Common myeloid progenitor, CD34-positive (primary cell): ENCODE measurements at regions of chr6 and their contacts with region 1.

Region 1: GRCh38 chr6:36027501-36028087 is at the start of gene MAPK14:
- DNase-seq: peak; percentile 100
- H3K4me3 ChIP-seq: peak within 1 kb of the TSS; percentile 99 to 100 (median 100)
- H3K27ac ChIP-seq: peak within 1 kb of the TSS; percentile 96 to 98
- H3K4me1 ChIP-seq: peaks cover 13 to 44% (median 33%) of the 10 kb centered on the region in 4 experiments
- H3K27me3 ChIP-seq: no peaks in the 10 kb centered on the region

Region 2: DNA sequence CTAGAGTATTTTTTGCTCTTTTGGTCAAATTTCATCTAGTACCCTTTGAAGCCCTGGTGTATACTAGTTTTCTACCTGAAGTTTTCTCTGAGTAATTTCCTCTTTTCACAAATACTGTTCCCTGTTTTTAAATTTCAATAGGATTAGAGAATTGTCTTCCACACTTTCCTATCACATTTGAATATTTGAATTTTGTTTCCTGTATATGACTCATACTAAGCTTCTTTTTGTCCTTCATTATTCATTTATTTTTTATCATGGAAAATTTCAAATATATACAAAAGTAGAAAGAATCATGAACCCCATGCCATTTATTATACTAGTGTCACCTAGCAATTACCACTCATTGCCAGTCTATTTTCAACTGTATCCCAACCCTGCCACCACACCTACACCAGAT is 169.7 kb before region 1 on chr6:
- CTCF ChIA-PET with region 1: no interaction called
- POLR2A ChIA-PET with region 1: no interaction called
- DNase-seq: no peak
- H3K4me3 ChIP-seq: no peak overlapping the region
- H3K27ac ChIP-seq: no peak overlapping the region
- H3K4me1 ChIP-seq: no peaks in the 10 kb centered on the region
- H3K27me3 ChIP-seq: no peaks in the 10 kb centered on the region

Region 3: GRCh38 chr6:36052097-36052496 is 24.5 kb after region 1 on chr6:
- CTCF ChIA-PET with region 1: interaction called, 25 read pairs
- POLR2A ChIA-PET with region 1: interaction called, 27 read pairs
- DNase-seq: no peak
- H3K4me3 ChIP-seq: no peak overlapping the region
- H3K27ac ChIP-seq: peak overlapping the region in 1 of 2 experiments; percentile 11
- H3K4me1 ChIP-seq: peaks cover 2 to 20% (median 6%) of the 10 kb centered on the region in 4 experiments
- H3K27me3 ChIP-seq: no peaks in the 10 kb centered on the region

Region 4: GRCh38 chr6:36083446-36083845 is 55.9 kb after region 1 on chr6:
- CTCF ChIA-PET with region 1: interaction called, 196 read pairs
- POLR2A ChIA-PET with region 1: interaction called, 3 read pairs
- DNase-seq: no peak
- H3K4me3 ChIP-seq: no peak overlapping the region
- H3K27ac ChIP-seq: no peak overlapping the region
- H3K4me1 ChIP-seq: peaks cover 0 to 4% (median 0%) of the 10 kb centered on the region in 4 experiments
- H3K27me3 ChIP-seq: no peaks in the 10 kb centered on the region

Region 5: DNA sequence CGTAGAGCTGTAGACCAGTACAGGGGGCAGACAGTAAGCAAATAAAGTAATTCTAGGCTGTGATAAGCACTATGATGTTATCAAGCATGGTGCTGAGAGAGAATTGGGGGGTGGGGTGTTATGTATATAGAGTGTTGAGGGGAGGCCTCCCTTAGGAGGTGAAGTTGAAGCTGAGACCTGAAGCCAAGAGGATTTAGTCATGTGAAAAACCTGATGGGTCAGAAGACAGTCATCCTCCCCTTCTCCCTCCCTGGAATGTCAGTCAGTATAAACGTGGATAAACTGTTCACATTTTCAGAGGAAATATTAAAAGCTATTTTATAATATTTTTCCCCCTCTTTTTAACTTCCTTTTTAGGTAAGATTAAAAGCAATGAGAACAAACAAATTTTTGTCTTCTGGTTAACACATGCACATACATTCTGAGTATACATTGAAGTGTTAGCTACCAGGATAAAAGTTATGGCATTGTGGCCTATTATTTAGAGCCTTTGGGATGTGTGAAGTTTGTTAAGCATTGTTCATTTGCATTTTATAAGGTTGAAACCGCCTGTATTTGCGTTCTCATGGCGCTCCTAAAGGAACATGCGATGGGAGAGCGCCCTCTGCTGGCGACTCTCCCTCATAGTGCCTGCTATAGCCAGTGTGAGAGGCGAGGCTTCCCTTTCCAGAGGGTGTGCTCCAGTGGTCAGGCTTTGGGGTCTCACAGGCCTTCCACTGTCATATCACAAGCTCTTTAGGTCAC is 67.3 kb after region 1 on chr6:
- CTCF ChIA-PET with region 1: interaction called, 196 read pairs
- POLR2A ChIA-PET with region 1: interaction called, 29 read pairs
- DNase-seq: peak; percentile 82 to 90 (median 84)
- H3K4me3 ChIP-seq: no peak overlapping the region
- H3K27ac ChIP-seq: peak overlapping the region; percentile 1 to 55
- H3K4me1 ChIP-seq: peaks cover 17 to 34% (median 29%) of the 10 kb centered on the region in 4 experiments
- H3K27me3 ChIP-seq: no peaks in the 10 kb centered on the region

Region 6: DNA sequence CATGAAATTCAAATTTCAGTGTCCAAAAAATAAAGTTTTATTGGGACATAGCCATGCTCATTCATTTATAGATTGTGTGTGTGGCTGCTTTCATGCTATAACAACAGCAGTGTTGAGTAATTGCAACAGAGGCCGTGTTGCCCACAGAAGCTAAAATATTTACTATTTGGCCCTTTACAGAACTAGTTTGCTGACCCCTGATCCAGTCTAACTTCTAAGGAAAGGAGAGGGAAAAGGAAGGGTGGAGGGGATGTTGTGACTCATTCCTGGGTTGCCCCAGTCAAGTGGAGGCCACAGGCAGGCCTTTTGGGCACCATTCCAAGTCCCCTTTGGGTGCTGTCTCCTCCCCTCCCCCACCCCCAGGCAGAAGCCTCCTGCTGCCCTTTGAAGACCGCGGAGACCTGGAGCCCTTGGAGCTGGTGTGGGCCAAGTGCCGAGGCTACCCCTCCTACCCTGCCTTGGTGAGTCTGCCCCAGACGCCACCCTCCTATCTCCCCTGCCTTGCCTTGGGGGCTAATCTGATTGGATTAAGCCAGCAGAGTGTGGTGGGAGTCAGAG is 197.4 kb after region 1 on chr6:
- CTCF ChIA-PET with region 1: no interaction called
- POLR2A ChIA-PET with region 1: no interaction called
- DNase-seq: no peak
- H3K4me3 ChIP-seq: no peak overlapping the region
- H3K27ac ChIP-seq: no peak overlapping the region
- H3K4me1 ChIP-seq: no peaks in the 10 kb centered on the region
- H3K27me3 ChIP-seq: no peaks in the 10 kb centered on the region